CD8-positive, alpha-beta T cell (primary cell): ENCODE measurements at regions of chr10 and their contacts with region 1.

Region 1: DNA sequence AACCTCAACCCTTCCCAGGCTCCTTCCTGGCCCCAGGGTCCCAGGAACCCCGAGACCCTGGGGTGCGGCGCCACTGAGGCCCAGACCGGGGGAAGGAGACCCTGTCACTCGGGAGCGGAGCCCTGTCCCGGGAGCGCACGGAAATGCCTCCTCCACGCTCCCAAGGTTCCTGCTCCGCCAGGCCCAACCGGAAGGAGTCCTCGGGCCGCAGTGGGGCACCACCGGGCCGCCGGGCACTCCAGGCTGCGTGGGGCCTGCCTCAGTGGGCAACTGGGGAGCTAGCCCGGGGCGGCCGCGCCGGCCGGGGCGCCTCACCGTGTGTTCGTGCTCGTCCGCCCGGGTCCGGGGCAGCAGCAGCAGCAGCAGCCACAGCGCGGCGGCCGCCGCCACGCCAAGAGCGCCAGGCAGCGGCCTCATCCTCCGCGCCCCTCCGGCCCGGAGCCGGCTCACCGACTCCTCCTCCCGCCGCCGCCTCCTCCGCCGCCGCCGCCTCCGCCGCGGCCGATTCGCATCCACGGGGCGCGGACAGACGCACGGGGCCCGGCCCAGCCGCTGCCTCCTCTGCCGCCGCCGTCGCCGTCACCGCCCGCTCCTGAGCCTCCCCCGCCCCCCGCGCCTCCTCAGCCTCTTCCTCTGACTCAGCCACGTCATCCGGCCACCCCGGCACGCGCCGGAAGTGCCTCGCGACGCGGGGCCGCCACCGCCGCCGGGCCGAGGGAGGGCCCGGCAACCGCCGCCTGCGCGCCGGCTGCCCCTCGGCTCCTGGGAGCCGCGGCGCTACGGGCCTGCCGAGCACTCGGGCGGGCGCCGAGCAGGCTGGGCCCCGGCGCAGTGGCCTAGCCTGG is at the start of gene TM9SF3:
- DNase-seq: peak; percentile 86 to 97 (median 94)
- ATAC-seq: peak; percentile 83
- H3K4me3 ChIP-seq: peak within 1 kb of the TSS; percentile 94
- H3K4me3 Mint-ChIP-seq: no peak within 1 kb of the TSS
- H3K27ac ChIP-seq: peak within 1 kb of the TSS; percentile 98 to 99
- H3K27ac Mint-ChIP-seq: peak within 1 kb of the TSS; percentile 86
- H3K4me1 ChIP-seq: peaks cover 51% of the 10 kb centered on the region
- H3K4me1 Mint-ChIP-seq: peaks cover 50% of the 10 kb centered on the region
- H3K27me3 ChIP-seq: no peaks in the 10 kb centered on the region
- H3K27me3 Mint-ChIP-seq: no peaks in the 10 kb centered on the region
- CTCF ChIP-seq: no peak
- total RNA-seq, gene TM9SF3: 105 to 106 TPM

Region 2: GRCh38 chr10:95656291-95657164 is 930.1 kb before region 1 on chr10 and contains the start of gene ALDH18A1:
- CTCF ChIA-PET with region 1: no interaction called
- POLR2A ChIA-PET with region 1: no interaction called
- intact Hi-C with region 1: loop called in 1 of 2 experiments (anchors 10 kb)
- DNase-seq: peak; percentile 85 to 97 (median 91)
- ATAC-seq: peak; percentile 95
- H3K4me3 ChIP-seq: peak within 1 kb of the TSS; percentile 79 to 82
- H3K4me3 Mint-ChIP-seq: peak within 1 kb of the TSS; percentile 99
- H3K27ac ChIP-seq: peak within 1 kb of the TSS; percentile 40 to 52
- H3K27ac Mint-ChIP-seq: peak within 1 kb of the TSS; percentile 84
- H3K4me1 ChIP-seq: peaks cover 13% of the 10 kb centered on the region
- H3K4me1 Mint-ChIP-seq: peaks cover 29% of the 10 kb centered on the region
- H3K27me3 ChIP-seq: no peaks in the 10 kb centered on the region
- H3K27me3 Mint-ChIP-seq: no peaks in the 10 kb centered on the region
- CTCF ChIP-seq: no peak
- total RNA-seq, gene ALDH18A1: 8.3 to 11.4 TPM

Region 3: DNA sequence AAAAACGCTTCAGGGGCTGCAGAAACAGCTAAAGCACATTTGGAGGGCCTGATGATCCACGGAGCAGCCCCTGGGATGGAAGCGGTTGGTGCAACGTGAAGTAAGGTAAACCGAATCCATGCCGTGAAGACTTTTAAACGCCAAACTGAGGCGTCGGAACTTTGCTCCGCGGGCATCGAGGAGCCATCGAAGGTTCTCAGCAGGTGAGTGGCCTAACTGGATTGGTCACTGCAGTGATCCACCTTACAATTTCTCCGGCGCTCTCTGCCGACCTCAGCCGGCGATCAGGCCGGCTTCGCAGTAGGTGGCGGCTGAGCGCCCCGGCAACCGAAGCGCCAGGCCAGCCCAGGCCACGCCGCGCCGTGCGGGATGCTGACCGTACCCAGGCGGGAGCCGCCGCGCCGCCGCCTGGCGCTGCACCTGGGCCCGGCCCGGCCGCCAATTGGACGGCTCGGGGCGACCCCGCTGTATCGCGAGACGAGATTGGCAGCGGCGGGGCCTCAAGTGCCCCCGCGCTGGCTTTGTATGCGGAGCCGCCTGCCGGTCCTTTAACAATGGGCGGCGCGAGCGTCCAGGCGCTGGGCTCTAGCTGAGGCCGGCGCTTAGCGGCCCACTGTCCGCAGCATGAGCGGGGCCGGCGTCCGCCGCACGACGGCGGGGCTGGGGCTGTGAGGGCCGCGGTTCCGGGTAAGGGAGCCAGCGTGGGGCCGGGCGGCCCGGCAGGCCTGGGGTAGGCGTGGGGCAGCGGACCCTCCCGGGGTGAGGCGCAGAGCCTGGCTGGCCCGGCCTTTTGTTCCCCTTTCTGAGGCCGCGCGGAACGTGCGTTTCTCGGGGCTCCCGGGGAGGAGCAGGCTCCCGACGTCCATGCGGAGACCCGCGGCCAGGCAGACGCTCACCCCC is 543.4 kb before region 1 on chr10 and contains the start of gene CCNJ:
- CTCF ChIA-PET with region 1: no interaction called
- POLR2A ChIA-PET with region 1: no interaction called
- intact Hi-C with region 1: loop called in 1 of 2 experiments (anchors 10 kb)
- DNase-seq: peak; percentile 64 to 91 (median 82)
- ATAC-seq: peak; percentile 87
- H3K4me3 ChIP-seq: peak within 1 kb of the TSS; percentile 81 to 92
- H3K4me3 Mint-ChIP-seq: peak within 1 kb of the TSS; percentile 94
- H3K27ac ChIP-seq: peak within 1 kb of the TSS; percentile 70
- H3K27ac Mint-ChIP-seq: peak within 1 kb of the TSS; percentile 90
- H3K4me1 ChIP-seq: peaks cover 18% of the 10 kb centered on the region
- H3K4me1 Mint-ChIP-seq: peaks cover 48% of the 10 kb centered on the region
- H3K27me3 ChIP-seq: no peaks in the 10 kb centered on the region
- H3K27me3 Mint-ChIP-seq: peaks cover 5% of the 10 kb centered on the region
- CTCF ChIP-seq: no peak
- total RNA-seq, gene CCNJ: 10.0 to 10.7 TPM

Region 4: DNA sequence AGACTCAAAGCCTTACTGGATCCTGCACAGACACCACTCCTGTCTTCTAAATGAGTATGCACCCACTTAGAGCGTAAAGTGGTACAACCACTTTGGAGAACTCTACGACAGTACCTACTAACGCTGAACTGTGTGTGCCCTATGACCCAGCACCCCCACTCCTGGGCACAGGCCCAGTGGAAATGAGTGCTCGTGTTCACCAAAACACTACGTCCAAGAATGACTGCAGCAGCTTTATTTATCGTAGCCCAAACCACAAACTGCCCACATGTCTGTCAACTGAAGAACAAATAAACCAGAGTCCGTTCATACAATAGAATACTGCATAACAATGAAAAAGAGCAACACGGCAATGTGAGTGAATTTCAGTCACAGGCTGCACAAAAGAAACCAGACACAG is 108.3 kb before region 1 on chr10:
- CTCF ChIA-PET with region 1: no interaction called
- POLR2A ChIA-PET with region 1: no interaction called
- intact Hi-C with region 1: no loop called
- DNase-seq: no peak
- ATAC-seq: no peak
- H3K4me3 ChIP-seq: no peak overlapping the region
- H3K4me3 Mint-ChIP-seq: no peak overlapping the region
- H3K27ac ChIP-seq: no peak overlapping the region
- H3K27ac Mint-ChIP-seq: no peak overlapping the region
- H3K4me1 ChIP-seq: no peaks in the 10 kb centered on the region
- H3K4me1 Mint-ChIP-seq: no peaks in the 10 kb centered on the region
- H3K27me3 ChIP-seq: no peaks in the 10 kb centered on the region
- H3K27me3 Mint-ChIP-seq: peaks cover 21% of the 10 kb centered on the region
- CTCF ChIP-seq: no peak

Region 5: DNA sequence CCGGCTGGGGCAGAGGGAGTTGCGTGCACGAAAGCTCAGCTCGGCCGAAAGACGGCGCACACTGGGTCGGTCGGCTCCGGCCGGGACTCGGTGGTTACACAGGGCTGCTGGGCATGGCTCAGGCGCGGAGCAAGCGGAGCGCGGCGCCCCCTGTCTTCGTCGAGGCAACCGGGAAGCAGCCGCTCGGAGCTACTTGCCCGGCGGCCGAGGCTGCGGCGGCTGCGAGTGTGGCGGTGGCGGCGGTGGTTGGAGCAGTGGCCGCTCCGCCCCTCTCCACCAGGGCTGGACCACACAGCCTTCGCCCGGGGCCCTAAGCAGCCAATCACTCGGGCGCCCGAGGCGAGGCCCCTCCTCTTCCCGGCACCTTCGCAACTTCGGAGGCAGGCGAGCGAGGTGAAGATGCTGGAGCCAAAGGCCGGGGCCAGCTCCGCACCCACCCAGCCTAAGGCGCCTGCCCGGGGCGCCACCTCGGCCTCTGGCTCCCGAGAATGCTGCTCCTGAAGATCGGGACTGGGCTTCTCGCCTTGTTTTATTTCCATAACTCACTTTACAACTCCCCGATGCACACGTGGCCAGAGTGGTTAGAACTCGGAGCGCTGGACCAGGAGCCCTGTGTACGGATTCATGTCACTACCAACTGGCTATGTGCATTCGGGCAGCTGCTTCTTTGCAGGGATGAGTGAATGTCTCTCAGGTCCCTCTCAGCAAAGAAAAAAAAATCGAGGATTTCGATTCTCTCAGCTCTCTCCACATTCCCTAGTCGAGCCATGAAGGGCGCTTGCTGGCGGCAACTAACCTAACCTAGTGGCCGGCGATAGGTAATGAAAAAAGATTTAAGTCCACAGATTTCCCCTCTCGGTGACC is 72.7 kb before region 1 on chr10 and contains the start of gene TLL2:
- CTCF ChIA-PET with region 1: no interaction called
- POLR2A ChIA-PET with region 1: no interaction called
- intact Hi-C with region 1: loop called in 1 of 2 experiments (anchors 5 kb)
- DNase-seq: peak in 8 of 9 experiments; percentile 20 to 71 (median 44)
- ATAC-seq: peak; percentile 59
- H3K4me3 ChIP-seq: peak within 1 kb of the TSS; percentile 45 to 53
- H3K4me3 Mint-ChIP-seq: peak within 1 kb of the TSS; percentile 81
- H3K27ac ChIP-seq: no peak within 1 kb of the TSS
- H3K27ac Mint-ChIP-seq: no peak within 1 kb of the TSS
- H3K4me1 ChIP-seq: peaks cover 6% of the 10 kb centered on the region
- H3K4me1 Mint-ChIP-seq: peaks cover 16% of the 10 kb centered on the region
- H3K27me3 ChIP-seq: peaks cover 8 to 12% of the 10 kb centered on the region in 2 experiments
- H3K27me3 Mint-ChIP-seq: peaks cover 31% of the 10 kb centered on the region
- CTCF ChIP-seq: no peak
- total RNA-seq, gene TLL2: not detected

Region 6: DNA sequence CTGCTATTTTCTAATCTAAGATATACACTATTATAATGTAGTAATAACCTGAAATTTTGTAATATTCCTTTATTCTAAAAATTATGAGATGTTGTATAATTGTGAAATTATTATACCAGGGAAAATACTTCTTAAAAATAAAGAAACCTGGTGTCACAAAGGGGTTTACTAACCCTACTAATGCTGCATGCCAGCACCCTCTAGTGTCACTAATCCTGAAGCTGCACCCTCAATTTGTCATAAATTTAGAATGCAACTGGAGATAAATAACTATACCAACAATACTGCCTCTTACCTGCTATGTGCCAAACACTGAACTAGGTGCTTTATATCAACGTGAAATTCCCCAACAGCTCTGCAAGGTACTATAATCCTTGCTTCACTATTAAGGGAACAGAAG is 30.6 kb before region 1 on chr10:
- CTCF ChIA-PET with region 1: no interaction called
- POLR2A ChIA-PET with region 1: no interaction called
- intact Hi-C with region 1: no loop called
- DNase-seq: peak in 2 of 9 experiments; percentile 9 to 20
- ATAC-seq: no peak
- H3K4me3 ChIP-seq: no peak overlapping the region
- H3K4me3 Mint-ChIP-seq: no peak overlapping the region
- H3K27ac ChIP-seq: no peak overlapping the region
- H3K27ac Mint-ChIP-seq: no peak overlapping the region
- H3K4me1 ChIP-seq: no peaks in the 10 kb centered on the region
- H3K4me1 Mint-ChIP-seq: no peaks in the 10 kb centered on the region
- H3K27me3 ChIP-seq: no peaks in the 10 kb centered on the region
- H3K27me3 Mint-ChIP-seq: no peaks in the 10 kb centered on the region
- CTCF ChIP-seq: no peak

Region 7: GRCh38 chr10:96719850-96720421 is 133.3 kb after region 1 on chr10:
- CTCF ChIA-PET with region 1: no interaction called
- POLR2A ChIA-PET with region 1: no interaction called
- intact Hi-C with region 1: loop called (anchors 1 to 5 kb)
- DNase-seq: peak; percentile 27 to 80 (median 58)
- ATAC-seq: peak; percentile 53
- H3K4me3 ChIP-seq: peak overlapping the region; percentile 53 to 81
- H3K4me3 Mint-ChIP-seq: peak overlapping the region; percentile 95
- H3K27ac ChIP-seq: peak overlapping the region in 1 of 2 experiments; percentile 88
- H3K27ac Mint-ChIP-seq: peak overlapping the region; percentile 88
- H3K4me1 ChIP-seq: peaks cover 7% of the 10 kb centered on the region
- H3K4me1 Mint-ChIP-seq: peaks cover 40% of the 10 kb centered on the region
- H3K27me3 ChIP-seq: no peaks in the 10 kb centered on the region
- H3K27me3 Mint-ChIP-seq: no peaks in the 10 kb centered on the region
- CTCF ChIP-seq: peak; percentile 28

Region 8: GRCh38 chr10:97081621-97082235 is 495.1 kb after region 1 on chr10:
- CTCF ChIA-PET with region 1: no interaction called
- POLR2A ChIA-PET with region 1: no interaction called
- intact Hi-C with region 1: no loop called
- DNase-seq: peak; percentile 28 to 71 (median 57)
- ATAC-seq: peak; percentile 44
- H3K4me3 ChIP-seq: no peak overlapping the region
- H3K4me3 Mint-ChIP-seq: no peak overlapping the region
- H3K27ac ChIP-seq: no peak overlapping the region
- H3K27ac Mint-ChIP-seq: no peak overlapping the region
- H3K4me1 ChIP-seq: no peaks in the 10 kb centered on the region
- H3K4me1 Mint-ChIP-seq: no peaks in the 10 kb centered on the region
- H3K27me3 ChIP-seq: peaks cover 0 to 2% of the 10 kb centered on the region in 2 experiments
- H3K27me3 Mint-ChIP-seq: peaks cover 28% of the 10 kb centered on the region
- CTCF ChIP-seq: peak; percentile 55